ENCODE measurements at regions of chr18 and their contacts with region 1.

Region 1: DNA sequence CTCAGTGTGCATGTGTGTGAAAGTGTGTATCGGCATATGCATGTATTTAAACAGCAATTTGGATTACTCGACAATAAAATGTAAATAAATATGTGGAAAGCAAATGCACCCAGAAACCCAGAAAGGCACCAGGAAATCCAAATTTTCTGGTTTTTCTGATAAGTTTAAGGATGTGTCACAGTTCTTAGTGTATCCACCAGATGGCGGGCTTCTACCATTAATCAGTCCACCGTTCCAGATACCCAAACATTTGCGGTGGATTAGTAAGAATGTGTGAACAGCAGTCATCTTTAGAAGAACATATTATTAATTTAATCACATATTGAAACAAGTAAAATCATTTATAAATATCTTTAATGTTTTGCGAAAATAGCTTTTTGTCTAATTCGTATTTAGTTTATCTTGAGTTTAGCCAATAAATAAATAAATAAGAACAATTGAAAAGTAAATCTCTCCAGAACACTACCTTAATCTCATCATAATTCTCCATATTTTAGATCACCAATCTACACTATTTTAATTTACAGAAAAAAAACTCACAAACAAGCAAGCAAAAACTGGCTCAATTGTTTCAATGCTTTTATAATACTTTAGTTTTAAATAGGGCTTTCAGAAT is 298.9 kb downstream of the DSEL start:
- DNase-seq: peak; percentile 73
- ATAC-seq: peak; percentile 83
- H3K4me3 ChIP-seq: no peak overlapping the region
- H3K27ac ChIP-seq: no peak overlapping the region
- H3K4me1 ChIP-seq: no peaks in the 10 kb centered on the region
- H3K27me3 ChIP-seq: no peaks in the 10 kb centered on the region
- CTCF ChIP-seq: peak; percentile 83

Region 2: GRCh38 chr18:67265464-67266245 is 48.0 kb after region 1 on chr18:
- CTCF ChIA-PET with region 1: no interaction called
- POLR2A ChIA-PET with region 1: no interaction called
- intact Hi-C with region 1: loop called (anchors 5 kb)
- DNase-seq: peak; percentile 86
- ATAC-seq: peak; percentile 66
- H3K4me3 ChIP-seq: peak overlapping the region; percentile 48
- H3K27ac ChIP-seq: peak overlapping the region; percentile 96
- H3K4me1 ChIP-seq: peaks cover 55% of the 10 kb centered on the region
- H3K27me3 ChIP-seq: no peaks in the 10 kb centered on the region
- CTCF ChIP-seq: no peak

Region 3: GRCh38 chr18:67282796-67283195 is 65.1 kb after region 1 on chr18:
- CTCF ChIA-PET with region 1: no interaction called
- POLR2A ChIA-PET with region 1: no interaction called
- intact Hi-C with region 1: loop called (anchors 5 kb)
- DNase-seq: no peak
- ATAC-seq: peak; percentile 29; the same call in 1 of the 2 replicates
- H3K4me3 ChIP-seq: no peak overlapping the region
- H3K27ac ChIP-seq: no peak overlapping the region
- H3K4me1 ChIP-seq: no peaks in the 10 kb centered on the region
- H3K27me3 ChIP-seq: no peaks in the 10 kb centered on the region
- CTCF ChIP-seq: no peak

Region 4: DNA sequence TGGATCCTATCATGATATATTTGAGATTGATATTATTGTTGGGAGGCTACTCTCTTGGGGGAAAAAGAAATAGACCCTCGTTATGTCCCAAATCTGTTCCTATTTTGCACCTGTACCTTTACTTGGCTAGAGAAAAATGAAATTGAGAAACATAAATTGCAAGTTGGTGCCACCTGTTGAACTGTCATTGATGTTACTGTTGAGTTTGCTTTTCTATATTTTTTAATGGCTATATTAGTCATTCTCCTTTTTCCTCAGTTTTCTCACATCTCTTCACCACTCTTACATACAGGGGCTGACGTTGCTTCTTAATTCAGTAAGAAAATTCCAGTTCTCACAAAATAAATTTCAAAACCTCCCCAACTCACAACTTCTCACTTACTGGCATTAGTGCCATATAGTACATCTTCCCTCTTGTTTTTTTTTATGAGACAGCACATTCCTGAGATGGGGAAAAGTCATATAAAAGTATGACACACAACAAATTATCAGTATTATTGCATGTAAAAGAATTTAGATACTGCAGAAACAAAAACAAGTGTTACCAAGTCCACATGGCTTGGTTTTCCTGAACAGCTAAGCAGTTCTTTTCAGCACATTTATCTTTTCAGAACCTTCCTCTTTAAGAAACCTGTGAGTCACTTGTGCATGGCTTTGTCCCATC is 647.1 kb after region 1 on chr18:
- CTCF ChIA-PET with region 1: no interaction called
- POLR2A ChIA-PET with region 1: no interaction called
- intact Hi-C with region 1: loop called (anchors 5 kb)
- DNase-seq: peak; percentile 60
- ATAC-seq: peak; percentile 79
- H3K4me3 ChIP-seq: no peak overlapping the region
- H3K27ac ChIP-seq: peak overlapping the region; percentile 43
- H3K4me1 ChIP-seq: peaks cover 13% of the 10 kb centered on the region
- H3K27me3 ChIP-seq: no peaks in the 10 kb centered on the region
- CTCF ChIP-seq: peak; percentile 57

Region 5: DNA sequence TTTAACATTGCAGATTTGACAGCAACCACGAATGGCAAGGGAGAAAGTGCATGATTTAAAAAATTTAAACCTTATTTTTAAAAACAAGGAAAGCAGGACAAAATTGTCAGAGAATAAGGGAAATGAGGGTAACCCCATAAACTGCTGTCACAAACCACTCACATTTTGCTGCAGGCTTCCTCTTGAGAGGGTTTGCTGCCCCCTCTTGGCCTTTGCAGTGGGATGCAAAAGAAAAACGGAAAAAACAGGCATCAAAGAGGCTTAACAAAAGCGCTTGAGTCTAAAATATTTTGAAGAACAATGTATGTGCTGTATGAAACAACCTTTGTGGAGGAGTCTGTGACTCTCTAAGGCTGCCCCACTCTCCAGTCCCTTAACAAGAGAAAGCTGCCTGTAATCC is 1405.7 kb after region 1 on chr18:
- CTCF ChIA-PET with region 1: no interaction called
- POLR2A ChIA-PET with region 1: no interaction called
- intact Hi-C with region 1: loop called (anchors 1 kb)
- DNase-seq: peak; percentile 78
- ATAC-seq: peak; percentile 57
- H3K4me3 ChIP-seq: no peak overlapping the region
- H3K27ac ChIP-seq: no peak overlapping the region
- H3K4me1 ChIP-seq: no peaks in the 10 kb centered on the region
- H3K27me3 ChIP-seq: no peaks in the 10 kb centered on the region
- CTCF ChIP-seq: peak; percentile 88

Region 6: GRCh38 chr18:68660354-68661183 is 1442.9 kb after region 1 on chr18:
- CTCF ChIA-PET with region 1: no interaction called
- POLR2A ChIA-PET with region 1: no interaction called
- intact Hi-C with region 1: loop called (anchors 1 kb)
- DNase-seq: peak; percentile 69
- ATAC-seq: peak; percentile 78
- H3K4me3 ChIP-seq: peak overlapping the region; percentile 45; the same call in 1 of the 2 replicates
- H3K27ac ChIP-seq: no peak overlapping the region
- H3K4me1 ChIP-seq: peaks cover 8% of the 10 kb centered on the region; the same call in 1 of the 2 replicates
- H3K27me3 ChIP-seq: no peaks in the 10 kb centered on the region
- CTCF ChIP-seq: peak; percentile 79

Region 7: GRCh38 chr18:68735483-68736343 is 1518.1 kb after region 1 on chr18:
- CTCF ChIA-PET with region 1: no interaction called
- POLR2A ChIA-PET with region 1: no interaction called
- intact Hi-C with region 1: loop called (anchors 1 kb)
- DNase-seq: peak; percentile 66
- ATAC-seq: peak; percentile 70
- H3K4me3 ChIP-seq: no peak overlapping the region
- H3K27ac ChIP-seq: 0 out of 2 replicates have a peak overlapping the region, but pooled peaks have one; percentile 5
- H3K4me1 ChIP-seq: peaks cover 21% of the 10 kb centered on the region
- H3K27me3 ChIP-seq: no peaks in the 10 kb centered on the region
- CTCF ChIP-seq: peak; percentile 91